Adrenal gland (tissue), 19 donors: ENCODE measurements at regions of chr2 and their contacts with region 1.

Region 1: GRCh38 chr2:175181104-175181876 is at the start of gene ATP5MC3:
- DNase-seq: peak; percentile 92 to 98 (median 95)
- H3K4me3 ChIP-seq: peak within 1 kb of the TSS; percentile 77 to 96 (median 84)
- H3K27ac ChIP-seq: peak within 1 kb of the TSS; percentile 83 to 93 (median 87)
- H3K4me1 ChIP-seq: peaks cover 7 to 23% of the 10 kb centered on the region in 2 donors
- H3K27me3 ChIP-seq: no peaks in the 10 kb centered on the region
- CTCF ChIP-seq: no peak
- POLR2A ChIP-seq: peak; percentile 85 to 88
- total RNA-seq, gene ATP5MC3: 104 to 249 (median 193) TPM

Region 2: GRCh38 chr2:174914853-174915760 is 266.2 kb before region 1 on chr2:
- intact Hi-C with region 1: no loop called
- DNase-seq: peak; percentile 21 to 70 (median 46)
- H3K4me3 ChIP-seq: no peak overlapping the region
- H3K27ac ChIP-seq: no peak overlapping the region
- H3K4me1 ChIP-seq: peaks cover 0 to 7% of the 10 kb centered on the region in 2 donors
- H3K27me3 ChIP-seq: no peaks in the 10 kb centered on the region
- CTCF ChIP-seq: no peak
- POLR2A ChIP-seq: no peak

Region 3: GRCh38 chr2:175111200-175111657 is 70.1 kb before region 1 on chr2:
- intact Hi-C with region 1: loop called in 1 of 2 experiments (anchors 10 kb)
- DNase-seq: no peak
- H3K4me3 ChIP-seq: no peak overlapping the region
- H3K27ac ChIP-seq: no peak overlapping the region
- H3K4me1 ChIP-seq: no peaks in the 10 kb centered on the region
- H3K27me3 ChIP-seq: no peaks in the 10 kb centered on the region
- CTCF ChIP-seq: peak; percentile 47 to 79 (median 70)
- POLR2A ChIP-seq: no peak

Region 4: GRCh38 chr2:175136334-175137215 is 44.7 kb before region 1 on chr2:
- intact Hi-C with region 1: loop called in 1 of 2 experiments (anchors 10 kb)
- DNase-seq: no peak
- H3K4me3 ChIP-seq: no peak overlapping the region
- H3K27ac ChIP-seq: no peak overlapping the region
- H3K4me1 ChIP-seq: peaks cover 0 to 4% of the 10 kb centered on the region in 2 donors
- H3K27me3 ChIP-seq: no peaks in the 10 kb centered on the region
- CTCF ChIP-seq: no peak
- POLR2A ChIP-seq: no peak

Region 5: DNA sequence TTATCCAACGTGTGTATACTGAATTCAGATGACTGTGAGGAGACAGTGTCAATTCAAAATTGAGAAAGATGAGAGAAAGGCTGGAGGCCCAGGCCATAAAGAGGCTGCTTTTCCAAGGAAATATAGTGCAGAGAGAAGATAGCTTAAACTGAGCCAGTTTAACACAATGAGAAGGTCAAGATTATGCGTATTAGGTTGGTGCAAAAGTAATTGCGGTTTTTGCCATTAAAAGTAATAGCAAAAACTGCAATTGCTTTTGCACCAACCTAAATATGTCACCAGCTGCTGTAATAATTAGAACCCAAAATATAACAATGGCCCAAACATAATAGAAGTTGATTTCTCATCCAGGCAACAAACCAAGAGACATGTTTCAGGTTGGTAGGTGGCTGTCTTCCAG is 148.9 kb after region 1 on chr2:
- intact Hi-C with region 1: no loop called
- DNase-seq: no peak
- H3K4me3 ChIP-seq: no peak overlapping the region
- H3K27ac ChIP-seq: no peak overlapping the region
- H3K4me1 ChIP-seq: no peaks in the 10 kb centered on the region
- H3K27me3 ChIP-seq: no peaks in the 10 kb centered on the region
- CTCF ChIP-seq: no peak
- POLR2A ChIP-seq: no peak

Region 6: GRCh38 chr2:175461839-175462238 is 280.5 kb after region 1 on chr2:
- intact Hi-C with region 1: no loop called
- DNase-seq: no peak
- H3K4me3 ChIP-seq: no peak overlapping the region
- H3K27ac ChIP-seq: no peak overlapping the region
- H3K4me1 ChIP-seq: no peaks in the 10 kb centered on the region
- H3K27me3 ChIP-seq: no peaks in the 10 kb centered on the region
- CTCF ChIP-seq: no peak
- POLR2A ChIP-seq: no peak